AG04450 (cell line): ENCODE measurements at regions of chr9 and their contacts with region 1.

Region 1: DNA sequence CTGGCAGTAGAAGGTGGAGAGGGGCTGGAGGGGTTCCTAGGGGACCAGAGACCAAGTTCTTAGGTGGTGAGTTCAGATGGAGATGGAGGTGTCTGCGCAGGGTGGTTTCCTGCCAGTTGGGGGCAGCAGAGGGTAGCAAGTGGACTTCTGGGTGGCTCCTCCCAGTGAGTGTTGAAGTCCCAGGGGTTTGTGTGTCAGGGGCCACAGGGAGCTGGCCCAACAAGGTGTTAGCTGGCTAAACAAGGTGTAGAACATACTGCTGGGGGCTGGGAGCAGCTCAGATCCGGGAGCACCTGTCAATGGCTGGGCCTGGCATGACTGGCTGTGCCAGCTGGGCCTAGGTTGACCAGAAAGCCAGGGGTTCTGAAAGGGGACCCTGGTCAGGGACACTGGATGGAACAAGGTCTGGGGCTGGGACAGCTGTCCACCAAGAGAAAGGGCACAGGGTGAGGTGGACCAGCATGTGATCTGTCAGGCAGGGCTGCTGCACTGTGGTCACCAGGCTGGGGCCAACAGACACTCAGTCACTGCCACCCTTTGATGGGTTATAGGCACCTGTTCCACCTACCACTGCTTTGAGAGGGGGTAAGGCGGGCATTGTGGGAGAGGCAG is 35.6 kb downstream of the DAB2IP start:
- DNase-seq: peak; percentile 30
- H3K4me3 ChIP-seq: no peak overlapping the region
- H3K27ac ChIP-seq: no peak overlapping the region
- H3K27me3 ChIP-seq: no peaks in the 10 kb centered on the region
- CTCF ChIP-seq: peak; percentile 92

Region 2: GRCh38 chr9:121573717-121574485 is 113.1 kb before region 1 on chr9:
- CTCF ChIA-PET with region 1: no interaction called
- POLR2A ChIA-PET with region 1: no interaction called
- DNase-seq: no peak
- H3K4me3 ChIP-seq: no peak overlapping the region
- H3K27ac ChIP-seq: no peak overlapping the region
- H3K27me3 ChIP-seq: no peaks in the 10 kb centered on the region
- CTCF ChIP-seq: no peak

Region 3: GRCh38 chr9:121622387-121623097 is 64.5 kb before region 1 on chr9:
- CTCF ChIA-PET with region 1: interaction called, 14 read pairs
- POLR2A ChIA-PET with region 1: no interaction called
- DNase-seq: no peak
- H3K4me3 ChIP-seq: no peak overlapping the region
- H3K27ac ChIP-seq: no peak overlapping the region
- H3K27me3 ChIP-seq: no peaks in the 10 kb centered on the region
- CTCF ChIP-seq: no peak

Region 4: GRCh38 chr9:121698627-121699570 is 11.9 kb after region 1 on chr9:
- CTCF ChIA-PET with region 1: interaction called, 26 read pairs
- POLR2A ChIA-PET with region 1: interaction called, 3 read pairs
- DNase-seq: no peak
- H3K4me3 ChIP-seq: peak overlapping the region; percentile 69
- H3K27ac ChIP-seq: no peak overlapping the region
- H3K27me3 ChIP-seq: no peaks in the 10 kb centered on the region
- CTCF ChIP-seq: no peak

Region 5: DNA sequence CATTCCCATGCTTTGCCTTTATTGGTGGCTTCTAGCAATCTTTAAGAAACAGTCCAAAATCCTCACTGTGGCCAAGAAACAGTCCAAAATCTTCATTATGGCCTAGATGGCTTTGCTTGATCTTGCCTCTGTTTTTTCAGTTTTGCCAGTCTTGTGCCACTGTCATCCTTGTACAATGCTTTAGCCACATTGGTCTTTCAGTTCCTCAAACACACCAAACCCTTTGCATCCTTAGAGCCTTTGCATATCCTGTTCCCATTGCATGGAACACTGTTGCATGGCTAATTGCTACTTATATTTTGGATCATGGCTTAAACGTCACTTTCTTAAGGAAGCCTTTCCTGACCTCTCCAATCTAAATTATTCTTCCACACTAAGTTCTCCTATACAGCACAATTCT is 599.7 kb after region 1 on chr9:
- CTCF ChIA-PET with region 1: no interaction called
- POLR2A ChIA-PET with region 1: no interaction called
- DNase-seq: no peak
- H3K4me3 ChIP-seq: no peak overlapping the region
- H3K27ac ChIP-seq: no peak overlapping the region
- H3K27me3 ChIP-seq: no peaks in the 10 kb centered on the region
- CTCF ChIP-seq: no peak